Heart left ventricle (tissue), 16 donors: ENCODE measurements at regions of chr12 and their contacts with region 1.

Region 1: GRCh38 chr12:123150744-123151456 is at the start of gene PITPNM2:
- DNase-seq: peak; percentile 68 to 81 (median 71)
- ATAC-seq: peak; percentile 55 to 85 (median 78)
- H3K4me3 ChIP-seq: peak within 1 kb of the TSS; percentile 64 to 90 (median 78)
- H3K27ac ChIP-seq: peak within 1 kb of the TSS; percentile 62 to 92 (median 82)
- H3K4me1 ChIP-seq: peaks cover 0 to 34% (median 22%) of the 10 kb centered on the region in 12 donors
- H3K27me3 ChIP-seq: peaks cover 0 to 5% (median 0%) of the 10 kb centered on the region in 9 donors
- CTCF ChIP-seq: peak in 7 of 12 donors; percentile 18 to 43 (median 26)
- POLR2A ChIP-seq: no peak
- total RNA-seq, gene PITPNM2: 13.2 to 28.5 (median 20.7) TPM

Region 2: GRCh38 chr12:122974274-122974891 is 176.5 kb before region 1 on chr12:
- intact Hi-C with region 1: loop called in 2 of 10 experiments (anchors 2 to 5 kb)
- DNase-seq: peak; percentile 98 to 99 (median 98)
- ATAC-seq: peak; percentile 95 to 97 (median 96)
- H3K4me3 ChIP-seq: peak overlapping the region; percentile 69 to 100 (median 90)
- H3K27ac ChIP-seq: peak overlapping the region; percentile 90 to 100 (median 98)
- H3K4me1 ChIP-seq: peaks cover 9 to 37% (median 26%) of the 10 kb centered on the region in 12 donors
- H3K27me3 ChIP-seq: no peaks in the 10 kb centered on the region
- CTCF ChIP-seq: no peak
- POLR2A ChIP-seq: no peak

Region 3: DNA sequence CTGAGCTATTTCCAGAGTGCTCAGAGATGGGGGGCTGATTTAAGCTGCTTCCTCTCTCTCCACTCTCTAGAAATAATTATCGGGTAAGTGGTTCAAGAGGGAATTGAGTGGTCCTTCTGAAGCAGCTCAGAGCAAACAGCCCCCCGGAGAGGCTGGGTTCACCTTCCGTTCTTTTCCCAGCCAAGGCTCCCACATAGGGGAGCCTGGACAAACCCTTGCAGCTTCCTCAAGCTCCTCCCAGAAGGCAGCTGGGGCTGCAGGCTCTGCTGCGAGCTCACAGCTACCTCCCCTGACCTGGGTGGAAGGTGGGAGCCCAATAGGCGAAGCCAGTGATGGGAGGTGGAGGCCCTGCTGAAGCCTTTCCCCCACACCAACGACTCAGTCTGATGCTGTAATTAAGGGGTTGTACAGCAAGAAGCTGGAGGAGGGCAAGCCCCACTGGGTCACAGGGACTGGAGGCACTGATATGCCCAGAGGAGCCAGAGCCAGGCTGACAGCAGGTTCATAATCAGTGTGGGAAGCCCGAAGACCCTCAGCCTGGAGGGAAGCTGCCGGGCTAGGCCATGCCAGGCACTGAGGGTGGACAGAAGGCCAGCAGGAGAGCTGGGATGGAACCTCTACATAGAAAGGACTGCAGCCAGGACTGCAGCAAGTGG is 118.0 kb before region 1 on chr12:
- intact Hi-C with region 1: no loop called
- DNase-seq: no peak
- ATAC-seq: no peak
- H3K4me3 ChIP-seq: no peak overlapping the region
- H3K27ac ChIP-seq: no peak overlapping the region
- H3K4me1 ChIP-seq: peaks cover 0 to 16% (median 4%) of the 10 kb centered on the region in 12 donors
- H3K27me3 ChIP-seq: no peaks in the 10 kb centered on the region
- CTCF ChIP-seq: no peak
- POLR2A ChIP-seq: no peak

Region 4: GRCh38 chr12:123043536-123044001 is 107.3 kb before region 1 on chr12:
- intact Hi-C with region 1: loop called (anchors 1 to 5 kb)
- DNase-seq: peak; percentile 80 to 91 (median 89)
- ATAC-seq: peak; percentile 87 to 94 (median 92)
- H3K4me3 ChIP-seq: no peak overlapping the region
- H3K27ac ChIP-seq: peak overlapping the region in 7 of 12 donors; percentile 3 to 75 (median 35)
- H3K4me1 ChIP-seq: peaks cover 2 to 59% (median 27%) of the 10 kb centered on the region in 12 donors
- H3K27me3 ChIP-seq: no peaks in the 10 kb centered on the region
- CTCF ChIP-seq: peak; percentile 49 to 86 (median 72)
- POLR2A ChIP-seq: no peak

Region 5: GRCh38 chr12:123099560-123100192 is 51.2 kb before region 1 on chr12:
- intact Hi-C with region 1: loop called in 2 of 10 experiments (anchors 5 to 10 kb)
- DNase-seq: peak in 1 of 5 donors; percentile 10
- ATAC-seq: no peak
- H3K4me3 ChIP-seq: no peak overlapping the region
- H3K27ac ChIP-seq: peak overlapping the region in 8 of 12 donors; percentile 78 to 92 (median 86)
- H3K4me1 ChIP-seq: peaks cover 21 to 95% (median 76%) of the 10 kb centered on the region in 12 donors
- H3K27me3 ChIP-seq: no peaks in the 10 kb centered on the region
- CTCF ChIP-seq: no peak
- POLR2A ChIP-seq: no peak

Region 6: DNA sequence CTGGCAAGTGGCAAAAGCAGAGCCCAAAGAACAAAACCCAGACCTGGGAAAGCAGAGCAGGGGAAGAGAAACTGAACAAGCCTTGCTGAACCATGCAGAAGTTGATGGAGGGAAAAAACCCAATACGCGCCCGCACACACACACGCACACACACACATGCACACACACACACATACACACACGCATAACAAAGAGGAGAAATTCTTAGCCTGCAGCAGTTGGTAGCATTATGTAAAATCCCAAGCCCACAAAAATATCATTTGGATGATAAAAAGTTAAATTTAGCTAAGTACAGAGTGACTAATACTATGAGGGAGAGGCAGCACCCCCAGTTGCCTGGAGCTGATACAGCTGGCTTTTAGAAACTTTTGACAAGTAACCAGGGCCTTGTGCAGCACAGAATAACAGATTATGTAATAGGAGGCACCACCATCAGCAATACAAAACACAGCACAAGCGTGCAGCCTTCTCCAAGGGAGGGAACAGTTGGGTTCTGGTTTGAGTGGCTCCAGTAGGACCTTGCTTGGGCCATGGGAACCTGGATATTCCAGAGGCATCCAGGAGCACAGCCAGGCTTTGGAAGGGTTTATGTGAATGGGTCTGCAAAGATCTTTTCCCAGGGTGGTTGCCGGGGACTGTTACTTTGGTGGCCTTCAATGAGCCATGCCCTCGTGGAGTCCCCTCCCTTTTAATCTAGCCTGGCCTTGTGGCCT is 35.3 kb before region 1 on chr12:
- intact Hi-C with region 1: loop called in 1 of 10 experiments (anchors 5 kb)
- DNase-seq: peak in 4 of 5 donors; percentile 69 to 75 (median 74)
- ATAC-seq: peak; percentile 89 to 92 (median 91)
- H3K4me3 ChIP-seq: peak overlapping the region in 2 of 12 donors; percentile 25 to 29
- H3K27ac ChIP-seq: peak overlapping the region; percentile 26 to 86 (median 76)
- H3K4me1 ChIP-seq: peaks cover 12 to 84% (median 49%) of the 10 kb centered on the region in 12 donors
- H3K27me3 ChIP-seq: no peaks in the 10 kb centered on the region
- CTCF ChIP-seq: peak in 1 of 12 donors; percentile 13
- POLR2A ChIP-seq: no peak

Region 7: GRCh38 chr12:123591702-123592481 is 441.0 kb after region 1 on chr12:
- intact Hi-C with region 1: no loop called
- DNase-seq: no peak
- ATAC-seq: peak in 1 of 4 donors; percentile 22
- H3K4me3 ChIP-seq: no peak overlapping the region
- H3K27ac ChIP-seq: no peak overlapping the region
- H3K4me1 ChIP-seq: peaks cover 0 to 48% (median 28%) of the 10 kb centered on the region in 12 donors
- H3K27me3 ChIP-seq: no peaks in the 10 kb centered on the region
- CTCF ChIP-seq: no peak
- POLR2A ChIP-seq: no peak